MCF 10A (cell line): ENCODE measurements at regions of chr5 and their contacts with region 1.

Region 1: DNA sequence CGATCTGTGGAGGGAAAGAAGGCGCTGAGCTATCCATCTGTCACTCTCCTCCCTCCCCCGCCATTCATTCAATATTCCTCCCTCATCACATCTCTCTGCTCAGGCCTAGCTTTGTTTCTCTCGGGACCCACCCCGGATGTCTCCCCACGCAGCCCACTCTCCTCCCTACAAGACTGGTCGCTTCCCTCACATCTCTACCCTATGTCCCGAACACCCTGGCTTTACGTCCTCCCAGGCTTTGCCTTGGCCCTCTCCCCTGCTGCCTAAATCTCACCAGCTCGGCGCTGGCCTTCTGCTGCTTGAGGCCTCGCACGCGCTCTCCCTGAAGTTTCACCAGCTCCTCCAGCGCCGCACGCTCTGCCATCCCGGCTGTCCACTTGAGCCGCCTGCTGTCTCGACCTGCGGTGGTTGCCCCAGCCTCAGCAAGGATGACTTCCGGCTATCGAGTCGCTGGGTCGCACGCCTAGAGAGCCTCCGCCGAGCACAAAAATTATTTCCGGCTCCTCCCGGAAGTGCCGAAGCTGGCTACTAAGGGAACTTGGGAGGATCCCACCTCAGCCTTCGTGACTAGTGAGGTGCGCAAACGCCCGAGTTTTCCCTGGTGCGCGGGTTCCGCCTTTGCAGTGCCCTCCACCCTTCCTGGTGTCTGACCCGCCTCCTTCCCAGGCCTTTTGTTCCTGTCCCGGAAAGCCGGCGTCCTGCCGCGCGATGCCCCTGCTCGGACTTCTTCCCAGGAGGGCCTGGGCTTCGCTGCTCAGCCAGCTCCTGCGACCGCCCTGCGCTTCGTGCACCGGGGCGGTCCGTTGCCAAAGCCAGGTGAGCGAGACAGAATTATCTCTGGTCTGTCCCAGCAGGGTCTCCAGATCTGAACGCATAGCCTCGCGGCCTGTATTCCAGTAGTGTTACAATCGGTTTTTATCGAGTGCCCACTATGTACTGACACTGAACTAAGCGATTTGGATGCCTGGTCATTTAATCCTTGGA is at the starts of genes HARS1 and HARS2:
- DNase-seq: peak; percentile 99
- H3K4me3 Mint-ChIP-seq: peak within 1 kb of the TSS; percentile 88
- H3K27ac Mint-ChIP-seq: peak within 1 kb of the TSS; percentile 87
- H3K4me1 Mint-ChIP-seq: peaks cover 16% of the 10 kb centered on the region
- H3K27me3 Mint-ChIP-seq: no peaks in the 10 kb centered on the region
- CTCF ChIP-seq: no peak
- total RNA-seq, gene HARS1: 126 and 131 TPM in 2 replicates
- total RNA-seq, gene HARS2: 48.5 and 54.3 TPM in 2 replicates

Region 2: GRCh38 chr5:140401362-140402257 is 289.6 kb before region 1 on chr5 and contains the start of gene ANKHD1:
- CTCF ChIA-PET with region 1: no interaction called
- POLR2A ChIA-PET with region 1: interaction called, 22 read pairs
- intact Hi-C with region 1: no loop called
- DNase-seq: peak; percentile 100
- H3K4me3 Mint-ChIP-seq: no peak within 1 kb of the TSS
- H3K27ac Mint-ChIP-seq: no peak within 1 kb of the TSS
- H3K4me1 Mint-ChIP-seq: peaks cover 19% of the 10 kb centered on the region
- H3K27me3 Mint-ChIP-seq: no peaks in the 10 kb centered on the region
- CTCF ChIP-seq: no peak
- total RNA-seq, gene ANKHD1: 142 and 146 TPM in 2 replicates

Region 3: DNA sequence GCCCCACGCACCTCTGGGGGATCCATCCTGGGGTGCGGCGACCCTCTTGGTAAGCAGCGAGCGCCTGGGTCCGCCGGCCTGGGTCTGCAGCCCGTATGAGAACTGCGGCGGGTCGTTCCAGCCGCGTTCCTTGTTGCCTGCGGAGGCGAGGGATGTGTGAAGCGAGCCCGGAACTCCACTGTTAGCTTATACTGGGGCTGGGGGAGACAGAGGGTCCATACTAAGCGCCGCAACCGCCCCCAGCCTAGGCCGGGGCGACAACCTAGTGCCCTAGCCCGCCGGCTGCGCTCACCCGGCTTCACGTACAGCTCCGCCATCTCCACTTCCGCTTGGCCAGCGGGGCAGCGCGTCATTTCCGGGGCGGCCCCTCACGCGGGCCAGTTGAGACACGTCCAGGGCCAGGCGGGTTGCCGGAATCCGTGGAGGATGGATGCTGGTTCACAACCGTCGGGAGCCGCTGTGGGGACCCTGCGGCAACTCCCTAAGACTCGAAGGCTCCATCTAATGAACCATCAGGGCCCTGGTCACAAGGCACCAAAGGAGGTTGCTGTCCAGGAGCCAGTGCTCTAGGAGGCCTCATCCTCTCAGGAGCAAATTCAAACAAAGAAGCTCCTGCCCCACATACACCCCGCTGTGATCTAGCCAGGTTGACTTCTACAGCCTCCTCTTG is 134.0 kb before region 1 on chr5 and contains the start of gene SRA1:
- CTCF ChIA-PET with region 1: no interaction called
- POLR2A ChIA-PET with region 1: interaction called, 10 read pairs
- intact Hi-C with region 1: no loop called
- DNase-seq: peak; percentile 96
- H3K4me3 Mint-ChIP-seq: peak within 1 kb of the TSS; percentile 87
- H3K27ac Mint-ChIP-seq: peak within 1 kb of the TSS; percentile 91
- H3K4me1 Mint-ChIP-seq: peaks cover 38% of the 10 kb centered on the region
- H3K27me3 Mint-ChIP-seq: no peaks in the 10 kb centered on the region
- CTCF ChIP-seq: no peak
- total RNA-seq, gene SRA1: 105 and 107 TPM in 2 replicates

Region 4: GRCh38 chr5:140575309-140575708 is 115.9 kb before region 1 on chr5:
- CTCF ChIA-PET with region 1: interaction called, 5 read pairs
- POLR2A ChIA-PET with region 1: interaction called, 5 read pairs
- intact Hi-C with region 1: loop called (anchors 1 kb)
- DNase-seq: peak; percentile 92
- H3K4me3 Mint-ChIP-seq: no peak overlapping the region
- H3K27ac Mint-ChIP-seq: no peak overlapping the region
- H3K4me1 Mint-ChIP-seq: no peaks in the 10 kb centered on the region
- H3K27me3 Mint-ChIP-seq: no peaks in the 10 kb centered on the region
- CTCF ChIP-seq: peak; percentile 82

Region 5: DNA sequence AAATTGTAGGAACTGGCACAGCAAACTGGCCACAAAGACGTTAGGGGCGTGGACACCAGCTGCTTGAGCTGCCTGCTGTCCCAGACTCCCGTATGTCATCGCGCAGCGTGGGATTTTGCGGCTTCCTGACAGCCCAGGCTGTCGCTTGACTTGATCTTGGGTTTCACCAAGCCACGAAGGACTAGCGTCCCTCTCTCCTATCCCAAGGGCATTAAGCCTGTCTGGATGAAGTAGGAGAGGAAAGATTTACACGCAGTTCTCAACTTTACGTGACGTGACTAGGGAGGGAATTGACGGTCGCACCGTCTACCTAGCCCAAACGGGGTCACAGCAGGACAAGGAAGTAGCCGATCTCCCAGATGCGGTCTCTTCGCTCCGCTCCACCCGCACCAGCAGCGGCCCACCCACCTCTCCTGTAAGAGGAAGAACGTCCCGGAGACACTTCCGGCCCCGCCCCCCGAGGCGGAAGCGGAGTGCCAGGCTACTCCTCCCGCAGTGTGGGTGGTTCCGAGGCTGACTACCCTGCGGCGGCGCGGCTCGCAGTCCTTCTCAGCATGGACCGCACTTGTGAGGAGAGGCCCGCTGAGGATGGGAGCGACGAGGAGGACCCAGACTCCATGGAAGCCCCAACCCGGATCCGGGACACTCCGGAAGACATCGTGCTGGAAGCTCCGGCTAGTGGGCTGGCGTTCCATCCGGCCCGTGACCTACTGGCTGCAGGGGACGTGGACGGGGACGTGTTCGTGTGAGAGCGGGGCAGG is 26.7 kb before region 1 on chr5 and contains the start of gene WDR55:
- CTCF ChIA-PET with region 1: interaction called, 4 read pairs
- POLR2A ChIA-PET with region 1: interaction called, 153 read pairs
- intact Hi-C with region 1: loop called (anchors 1 kb)
- DNase-seq: peak; percentile 98
- H3K4me3 Mint-ChIP-seq: peak within 1 kb of the TSS; percentile 100
- H3K27ac Mint-ChIP-seq: peak within 1 kb of the TSS; percentile 98
- H3K4me1 Mint-ChIP-seq: peaks cover 32% of the 10 kb centered on the region
- H3K27me3 Mint-ChIP-seq: no peaks in the 10 kb centered on the region
- CTCF ChIP-seq: no peak
- total RNA-seq, gene WDR55: 35.0 and 36.4 TPM in 2 replicates

Region 6: GRCh38 chr5:140710899-140711552 is 19.8 kb after region 1 on chr5:
- CTCF ChIA-PET with region 1: interaction called, 4 read pairs
- POLR2A ChIA-PET with region 1: interaction called, 63 read pairs
- intact Hi-C with region 1: loop called (anchors 1 kb)
- DNase-seq: peak; percentile 99
- H3K4me3 Mint-ChIP-seq: peak overlapping the region; percentile 88
- H3K27ac Mint-ChIP-seq: peak overlapping the region; percentile 94
- H3K4me1 Mint-ChIP-seq: peaks cover 5% of the 10 kb centered on the region
- H3K27me3 Mint-ChIP-seq: no peaks in the 10 kb centered on the region
- CTCF ChIP-seq: no peak

Region 7: GRCh38 chr5:140725799-140726471 is 34.7 kb after region 1 on chr5:
- CTCF ChIA-PET with region 1: no interaction called
- POLR2A ChIA-PET with region 1: interaction called, 11 read pairs
- intact Hi-C with region 1: no loop called
- DNase-seq: peak; percentile 99
- H3K4me3 Mint-ChIP-seq: peak overlapping the region; percentile 72
- H3K27ac Mint-ChIP-seq: peak overlapping the region; percentile 42
- H3K4me1 Mint-ChIP-seq: peaks cover 6% of the 10 kb centered on the region
- H3K27me3 Mint-ChIP-seq: no peaks in the 10 kb centered on the region
- CTCF ChIP-seq: no peak

Region 8: GRCh38 chr5:142466195-142466971 is 1775.2 kb after region 1 on chr5:
- CTCF ChIA-PET with region 1: no interaction called
- POLR2A ChIA-PET with region 1: no interaction called
- intact Hi-C with region 1: no loop called
- DNase-seq: peak; percentile 31
- H3K4me3 Mint-ChIP-seq: no peak overlapping the region
- H3K27ac Mint-ChIP-seq: peak overlapping the region; percentile 28
- H3K4me1 Mint-ChIP-seq: peaks cover 9% of the 10 kb centered on the region
- H3K27me3 Mint-ChIP-seq: no peaks in the 10 kb centered on the region
- CTCF ChIP-seq: no peak